ENCODE measurements at regions of chr5 and their contacts with region 1.

Region 1: GRCh38 chr5:43105369-43106289 is 15.1 kb upstream of the ZNF131 start:
- DNase-seq: peak; percentile 85
- H3K4me3 Mint-ChIP-seq: peak overlapping the region; percentile 80
- H3K27ac Mint-ChIP-seq: peak overlapping the region; percentile 84
- H3K4me1 Mint-ChIP-seq: peaks cover 44% of the 10 kb centered on the region
- H3K27me3 Mint-ChIP-seq: no peaks in the 10 kb centered on the region

Region 2: GRCh38 chr5:43019614-43020293 is 85.9 kb before region 1 on chr5:
- intact Hi-C with region 1: loop called (anchors 5 kb)
- DNase-seq: peak; percentile 84
- H3K4me3 Mint-ChIP-seq: peak overlapping the region; percentile 96
- H3K27ac Mint-ChIP-seq: peak overlapping the region; percentile 99
- H3K4me1 Mint-ChIP-seq: peaks cover 38% of the 10 kb centered on the region
- H3K27me3 Mint-ChIP-seq: no peaks in the 10 kb centered on the region

Region 3: DNA sequence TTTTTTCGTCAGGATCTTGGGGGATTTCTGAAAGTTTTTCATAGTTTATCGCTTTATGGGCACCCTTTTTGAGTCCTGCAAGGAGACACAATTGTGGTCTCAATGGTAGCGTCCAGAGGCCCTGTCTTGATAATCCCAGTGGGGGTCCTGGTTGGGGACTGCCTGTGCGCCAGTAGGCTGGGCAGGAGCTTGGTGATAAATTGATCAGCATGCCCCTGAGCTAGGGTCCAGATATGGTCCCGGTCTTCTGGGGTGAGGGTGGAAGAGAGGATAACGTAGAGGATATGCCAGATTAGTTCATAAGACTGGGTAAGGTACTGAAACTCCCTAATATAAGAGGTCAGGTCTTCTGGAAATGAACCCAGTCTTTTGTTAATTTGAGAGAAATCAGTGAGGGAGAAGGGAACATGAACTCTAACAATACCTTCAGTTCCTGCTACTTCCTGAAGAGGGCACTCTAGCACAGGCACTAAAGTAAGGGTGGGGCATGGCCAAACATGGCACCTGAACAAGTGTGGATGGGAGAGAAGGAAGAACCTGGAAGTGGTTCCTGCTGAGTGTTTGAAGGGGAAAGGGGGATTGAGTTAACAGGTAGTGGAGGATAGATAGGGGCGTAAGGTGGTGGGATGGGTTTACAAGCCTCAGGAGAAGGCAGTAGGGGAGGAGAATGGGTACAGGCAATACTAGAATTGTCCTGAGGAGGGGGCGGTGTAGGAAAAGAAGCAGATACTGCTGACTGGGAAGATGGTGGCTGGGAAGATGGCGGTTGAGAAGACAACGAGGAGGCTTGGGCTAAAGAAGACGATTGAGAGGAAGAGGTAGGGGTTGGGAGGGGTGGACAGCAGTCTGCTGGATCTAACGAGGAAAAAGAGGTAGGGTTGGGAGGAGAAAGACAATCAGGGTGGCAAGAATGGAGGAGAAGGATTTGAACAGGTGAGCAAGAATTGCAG is 31.8 kb before region 1 on chr5:
- intact Hi-C with region 1: loop called (anchors 2 kb)
- DNase-seq: peak; percentile 36
- H3K4me3 Mint-ChIP-seq: no peak overlapping the region
- H3K27ac Mint-ChIP-seq: peak overlapping the region; percentile 51
- H3K4me1 Mint-ChIP-seq: peaks cover 28% of the 10 kb centered on the region
- H3K27me3 Mint-ChIP-seq: no peaks in the 10 kb centered on the region

Region 4: GRCh38 chr5:43156388-43156787 is 50.8 kb after region 1 on chr5:
- intact Hi-C with region 1: no loop called
- DNase-seq: no peak
- H3K4me3 Mint-ChIP-seq: no peak overlapping the region
- H3K27ac Mint-ChIP-seq: no peak overlapping the region
- H3K4me1 Mint-ChIP-seq: peaks cover 23% of the 10 kb centered on the region
- H3K27me3 Mint-ChIP-seq: no peaks in the 10 kb centered on the region

Region 5: DNA sequence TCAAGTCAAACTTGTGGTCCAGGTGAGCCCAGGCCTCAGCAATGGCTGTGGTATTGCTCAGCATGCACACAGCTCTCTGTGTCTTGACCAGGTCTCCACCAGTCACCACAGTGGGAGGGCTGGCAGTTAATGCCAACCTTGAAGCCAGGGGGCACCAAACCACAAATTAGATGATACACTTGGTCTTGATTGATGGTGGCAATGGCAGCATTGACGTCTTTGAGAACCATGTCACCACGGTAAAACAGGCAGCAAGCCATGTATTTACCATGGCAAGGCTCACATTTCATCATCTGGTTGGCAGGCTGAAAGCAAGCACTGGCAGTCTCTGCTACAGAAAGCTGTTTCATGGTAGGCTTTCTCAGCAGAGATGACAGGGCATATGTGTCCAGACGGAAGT is 126.3 kb after region 1 on chr5:
- intact Hi-C with region 1: loop called (anchors 5 kb)
- DNase-seq: no peak
- H3K4me3 Mint-ChIP-seq: no peak overlapping the region
- H3K27ac Mint-ChIP-seq: no peak overlapping the region
- H3K4me1 Mint-ChIP-seq: peaks cover 27% of the 10 kb centered on the region
- H3K27me3 Mint-ChIP-seq: no peaks in the 10 kb centered on the region

Region 6: DNA sequence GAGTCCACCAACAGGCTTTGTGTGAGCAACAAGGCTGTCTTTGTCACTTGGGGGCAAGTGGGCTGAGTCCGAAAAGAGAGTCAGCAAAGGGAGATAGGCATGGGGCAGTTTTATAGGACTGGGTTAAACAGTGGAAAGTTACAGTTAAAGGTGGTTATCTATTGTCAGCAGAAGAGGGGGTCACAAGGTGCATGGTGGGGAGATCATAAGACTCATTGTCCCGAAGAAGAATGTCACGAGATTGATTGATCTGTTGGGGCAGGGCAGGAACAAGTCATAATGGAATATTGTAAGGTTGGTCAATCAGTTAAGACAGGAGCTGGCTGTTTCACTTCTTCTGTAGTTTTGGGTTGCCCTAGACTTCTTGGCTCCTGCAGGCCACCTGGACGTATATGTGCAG is 215.2 kb after region 1 on chr5:
- intact Hi-C with region 1: no loop called
- DNase-seq: no peak
- H3K4me3 Mint-ChIP-seq: no peak overlapping the region
- H3K27ac Mint-ChIP-seq: no peak overlapping the region
- H3K4me1 Mint-ChIP-seq: peaks cover 5% of the 10 kb centered on the region
- H3K27me3 Mint-ChIP-seq: no peaks in the 10 kb centered on the region

Region 7: DNA sequence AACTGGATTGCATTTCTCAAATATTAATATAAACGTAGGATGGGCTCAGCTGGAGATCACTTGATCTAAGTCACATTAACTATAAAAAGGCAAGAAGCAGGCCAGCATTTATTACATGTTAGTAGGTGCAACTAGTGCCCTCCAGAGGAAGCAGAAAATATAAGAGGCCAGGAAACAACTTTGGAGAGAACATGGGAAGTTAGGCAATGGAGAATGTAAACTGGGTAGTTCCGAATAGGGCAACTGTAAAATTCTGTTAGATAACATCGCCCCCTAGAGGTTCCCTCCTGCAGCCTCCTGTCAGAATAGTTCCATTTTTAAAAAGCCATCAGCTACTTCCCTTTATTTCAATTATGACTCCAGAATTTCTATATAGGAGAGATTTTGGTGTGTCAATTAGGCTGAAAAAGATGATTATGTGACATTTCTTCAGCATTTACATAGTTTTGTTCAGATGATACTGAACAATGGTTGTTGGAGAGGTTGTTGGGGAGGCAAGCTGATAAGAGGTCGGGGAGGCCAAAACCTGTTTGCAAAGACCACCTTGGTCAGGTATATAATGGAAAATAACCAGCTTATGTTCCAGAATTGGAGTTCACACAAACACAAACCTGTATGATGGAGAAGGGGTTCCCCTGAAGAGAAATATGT is 284.2 kb after region 1 on chr5:
- intact Hi-C with region 1: loop called (anchors 5 kb)
- DNase-seq: peak; percentile 37
- H3K4me3 Mint-ChIP-seq: no peak overlapping the region
- H3K27ac Mint-ChIP-seq: no peak overlapping the region
- H3K4me1 Mint-ChIP-seq: peaks cover 20% of the 10 kb centered on the region
- H3K27me3 Mint-ChIP-seq: no peaks in the 10 kb centered on the region

Measured in activated T-helper 2 cell treated with anti-CD3 and anti-CD28 coated beads, Interferon-gamma antibody, Interleukin-2, Interleukin-4, amounts not matched to agents 10 μg/mL and 5 μg/mL and 100 μg/mL, durations not matched to agents 14 hours and 24 hours and 36 hours (primary cell).